WTC11 (cell line): ENCODE measurements at regions of chr3 and their contacts with region 1.

Region 1: DNA sequence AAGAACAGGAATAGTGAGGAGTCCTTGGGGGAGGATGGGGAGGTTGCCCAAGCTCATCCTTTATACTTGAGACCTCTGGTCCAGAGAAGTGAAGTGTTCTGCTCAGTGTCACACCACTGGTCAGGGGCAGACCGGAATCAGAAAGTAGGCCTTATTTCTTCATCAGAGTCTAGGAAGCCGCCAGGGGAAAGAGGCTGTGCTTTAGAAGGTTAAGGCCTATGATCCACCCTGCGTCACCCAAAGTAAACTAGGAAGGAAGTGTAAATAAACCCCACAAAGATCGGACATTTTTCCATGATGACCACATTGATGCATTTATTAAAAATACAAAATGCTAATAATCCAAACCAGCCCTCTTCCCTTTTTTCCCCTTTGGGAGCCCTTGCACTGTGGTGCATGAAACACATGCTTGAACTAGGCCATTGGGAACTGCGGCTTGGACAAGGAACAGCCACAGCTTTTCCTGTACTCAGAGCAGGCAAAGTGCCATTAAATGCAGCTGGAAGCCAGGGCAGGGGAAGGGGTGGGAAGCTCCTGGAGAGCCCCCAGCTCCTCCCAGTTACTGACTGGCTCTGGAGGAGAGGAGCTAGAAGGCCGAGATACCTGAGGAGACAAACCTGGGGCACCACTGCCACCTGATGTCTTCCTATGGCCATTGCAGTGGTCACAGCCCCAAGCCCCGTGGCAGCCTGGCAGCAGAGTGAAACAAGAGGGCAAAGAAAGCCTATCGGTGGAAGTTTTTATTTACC is 37.0 kb downstream of the CDC25A start:
- DNase-seq: peak; percentile 90
- ATAC-seq: peak; percentile 99
- H3K4me3 Mint-ChIP-seq: no peak overlapping the region
- H3K27ac Mint-ChIP-seq: no peak overlapping the region
- H3K4me1 Mint-ChIP-seq: peaks cover 7% of the 10 kb centered on the region
- H3K27me3 Mint-ChIP-seq: no peaks in the 10 kb centered on the region
- CTCF ChIP-seq: peak; percentile 69

Region 2: DNA sequence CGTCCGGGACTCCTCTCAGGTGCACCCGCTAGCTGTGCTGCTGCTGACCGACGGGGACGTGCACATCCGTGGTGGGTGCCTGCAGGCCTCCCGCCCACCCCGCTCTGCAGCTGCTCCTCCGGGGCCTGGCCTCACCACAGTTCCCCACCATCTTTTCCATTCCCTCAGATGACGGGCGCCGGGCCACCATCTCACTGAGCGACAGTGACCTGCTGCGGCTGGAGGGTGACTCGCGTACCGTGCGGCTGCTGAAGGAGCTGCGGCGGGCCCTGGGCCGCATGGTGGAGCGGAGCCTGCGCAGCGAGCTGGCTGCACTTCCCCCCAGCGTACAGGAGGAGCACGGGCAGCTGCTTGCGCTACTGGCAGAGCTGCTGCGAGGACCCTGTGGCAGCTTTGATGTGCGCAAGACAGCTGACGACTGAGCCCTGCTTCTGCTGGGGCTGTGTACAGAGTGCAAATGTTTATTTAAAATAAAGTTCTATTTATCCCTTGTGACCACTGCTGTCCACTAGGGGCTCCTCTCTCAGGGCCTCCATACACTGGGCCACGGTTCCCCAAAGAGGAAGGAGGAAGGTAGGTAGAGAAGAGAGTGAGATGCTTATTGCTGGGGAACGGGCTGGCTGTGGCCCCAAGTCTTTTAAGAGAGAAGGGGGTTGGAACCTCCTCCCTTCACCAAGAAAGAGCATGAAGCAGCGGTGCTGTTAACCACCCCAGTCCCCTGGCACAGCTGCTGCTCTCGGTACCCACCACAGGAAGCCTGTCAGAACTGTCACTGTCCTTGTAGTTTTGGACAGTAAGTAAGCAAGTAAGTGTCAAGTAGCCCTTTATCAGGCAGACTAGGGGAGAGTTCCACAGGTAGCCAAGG is 301.3 kb before region 1 on chr3:
- CTCF ChIA-PET with region 1: interaction called, 45 read pairs
- POLR2A ChIA-PET with region 1: no interaction called
- DNase-seq: no peak
- ATAC-seq: peak; percentile 25
- H3K4me3 Mint-ChIP-seq: no peak overlapping the region
- H3K27ac Mint-ChIP-seq: peak overlapping the region; percentile 64
- H3K4me1 Mint-ChIP-seq: no peaks in the 10 kb centered on the region
- H3K27me3 Mint-ChIP-seq: no peaks in the 10 kb centered on the region
- CTCF ChIP-seq: peak; percentile 29; the same call in 1 of the 2 replicates

Region 3: DNA sequence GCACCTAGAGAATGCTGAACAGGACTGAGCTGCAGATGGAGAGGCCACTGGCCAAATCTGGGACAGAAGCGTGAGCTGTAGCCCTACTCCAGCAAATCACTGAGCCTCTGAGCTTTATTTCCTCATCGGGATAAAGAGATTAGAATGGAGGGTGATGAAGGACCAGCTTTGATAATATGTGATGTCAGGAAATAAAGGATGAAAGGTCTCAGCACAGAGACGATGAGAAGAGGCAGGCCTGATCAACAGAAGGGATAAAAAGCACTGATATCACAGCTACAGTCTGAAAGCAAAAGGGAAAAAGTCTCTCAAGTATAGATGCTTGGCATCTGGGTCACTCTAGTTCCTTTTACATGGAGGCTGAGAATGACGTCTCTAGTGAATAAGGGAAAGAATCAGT is 278.3 kb before region 1 on chr3:
- CTCF ChIA-PET with region 1: interaction called, 30 read pairs
- POLR2A ChIA-PET with region 1: no interaction called
- DNase-seq: no peak
- ATAC-seq: no peak
- H3K4me3 Mint-ChIP-seq: no peak overlapping the region
- H3K27ac Mint-ChIP-seq: no peak overlapping the region
- H3K4me1 Mint-ChIP-seq: peaks cover 9% of the 10 kb centered on the region
- H3K27me3 Mint-ChIP-seq: no peaks in the 10 kb centered on the region
- CTCF ChIP-seq: no peak

Region 4: DNA sequence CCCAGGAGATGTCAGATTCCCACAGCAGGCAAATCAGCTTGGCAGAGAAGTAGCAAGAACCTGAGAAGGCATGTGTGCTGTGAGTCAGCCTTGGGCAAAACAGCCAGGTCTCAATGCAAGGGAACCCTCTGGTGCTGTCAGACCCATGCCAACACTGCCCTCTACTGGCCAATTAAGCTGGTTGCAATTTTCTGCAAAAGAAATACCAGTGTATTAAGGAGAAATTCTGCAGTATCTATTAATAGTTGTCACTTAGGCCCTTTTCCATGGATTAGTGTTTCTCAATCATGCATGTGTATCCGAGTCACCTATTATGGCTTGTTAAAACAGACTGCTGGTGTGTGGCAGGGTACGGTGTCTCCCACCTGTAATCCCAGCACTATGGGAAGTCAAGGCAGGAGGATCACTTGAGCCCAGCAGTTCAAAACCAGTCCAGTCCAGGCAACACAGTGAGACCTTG is 161.2 kb before region 1 on chr3:
- CTCF ChIA-PET with region 1: interaction called, 42 read pairs
- POLR2A ChIA-PET with region 1: no interaction called
- DNase-seq: peak; percentile 67
- ATAC-seq: peak; percentile 97
- H3K4me3 Mint-ChIP-seq: no peak overlapping the region
- H3K27ac Mint-ChIP-seq: peak overlapping the region; percentile 38; the same call in 1 of the 2 replicates
- H3K4me1 Mint-ChIP-seq: peaks cover 14% of the 10 kb centered on the region
- H3K27me3 Mint-ChIP-seq: no peaks in the 10 kb centered on the region
- CTCF ChIP-seq: peak; percentile 94

Region 5: DNA sequence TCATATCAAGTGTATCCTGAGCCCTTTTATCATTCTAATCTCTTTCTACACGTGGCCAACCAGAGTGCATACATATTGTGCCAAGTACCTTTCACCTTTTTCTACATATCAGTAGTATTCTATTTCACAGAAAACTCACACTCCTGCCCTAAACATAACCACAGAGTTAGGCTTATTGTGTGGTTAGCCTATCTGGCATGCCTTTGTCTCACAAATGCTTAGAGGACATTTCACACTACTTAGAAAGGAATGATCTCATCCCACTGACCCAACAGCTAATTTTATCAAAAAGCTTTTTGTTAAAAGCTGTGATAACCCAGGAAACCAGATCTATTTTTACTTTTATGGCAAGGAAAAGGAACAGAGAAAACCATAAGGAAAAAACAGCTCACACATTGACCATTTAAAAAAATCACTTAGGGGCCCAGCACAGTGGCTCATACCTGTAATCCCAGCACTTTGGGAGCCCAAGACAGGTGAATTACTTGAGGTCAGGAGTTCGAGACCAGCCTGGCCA is 117.2 kb before region 1 on chr3:
- CTCF ChIA-PET with region 1: interaction called, 20 read pairs
- POLR2A ChIA-PET with region 1: no interaction called
- DNase-seq: no peak
- ATAC-seq: peak; percentile 32; the same call in 1 of the 2 replicates
- H3K4me3 Mint-ChIP-seq: no peak overlapping the region
- H3K27ac Mint-ChIP-seq: peak overlapping the region; percentile 94
- H3K4me1 Mint-ChIP-seq: peaks cover 29% of the 10 kb centered on the region
- H3K27me3 Mint-ChIP-seq: no peaks in the 10 kb centered on the region
- CTCF ChIP-seq: no peak

Region 6: GRCh38 chr3:48125026-48125705 is 26.1 kb before region 1 on chr3:
- CTCF ChIA-PET with region 1: interaction called, 11 read pairs
- POLR2A ChIA-PET with region 1: no interaction called
- DNase-seq: no peak
- ATAC-seq: peak; percentile 56
- H3K4me3 Mint-ChIP-seq: no peak overlapping the region
- H3K27ac Mint-ChIP-seq: no peak overlapping the region
- H3K4me1 Mint-ChIP-seq: peaks cover 12% of the 10 kb centered on the region
- H3K27me3 Mint-ChIP-seq: no peaks in the 10 kb centered on the region
- CTCF ChIP-seq: no peak